CD8-positive, alpha-beta T cell (primary cell): ENCODE measurements at regions of chr4 and their contacts with region 1.

Region 1: DNA sequence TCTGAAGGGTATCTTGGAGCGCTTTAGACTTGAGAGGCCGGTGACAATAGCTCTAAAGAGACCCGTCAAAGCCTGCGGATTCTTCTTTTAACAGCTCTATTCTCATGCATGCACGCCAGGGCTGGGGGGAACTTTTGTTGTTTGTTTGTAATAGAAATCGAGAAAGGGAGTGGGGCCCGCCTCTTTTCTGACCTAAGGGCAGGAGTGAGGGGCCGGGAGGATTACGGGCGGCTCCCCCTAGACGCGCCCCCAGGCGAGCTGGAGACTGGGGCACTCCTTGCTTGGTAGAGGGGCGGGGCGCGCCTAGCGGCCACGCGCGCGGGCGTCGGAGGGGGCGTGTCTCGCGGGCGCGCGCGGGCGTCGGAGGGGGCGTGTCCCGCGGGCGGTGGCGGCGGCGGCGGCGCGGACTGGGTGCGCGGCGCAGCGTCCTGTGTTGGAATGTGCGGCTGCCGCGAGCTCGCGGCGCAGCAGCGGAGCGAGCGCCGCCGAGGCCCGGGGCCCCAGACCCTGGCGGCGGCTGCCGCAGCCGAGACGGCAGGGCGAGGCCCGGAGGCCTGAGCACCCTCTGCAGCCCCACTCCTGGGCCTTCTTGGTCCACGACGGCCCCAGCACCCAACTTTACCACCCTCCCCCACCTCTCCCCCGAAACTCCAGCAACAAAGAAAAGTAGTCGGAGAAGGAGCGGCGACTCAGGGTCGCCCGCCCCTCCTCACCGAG is at the start of gene REST:
- DNase-seq: peak; percentile 74 to 91 (median 84)
- ATAC-seq: peak; percentile 67
- H3K4me3 ChIP-seq: peak within 1 kb of the TSS; percentile 64 to 92
- H3K4me3 Mint-ChIP-seq: peak within 1 kb of the TSS; percentile 97
- H3K27ac ChIP-seq: peak within 1 kb of the TSS; percentile 57 to 86
- H3K27ac Mint-ChIP-seq: peak within 1 kb of the TSS; percentile 95
- H3K4me1 ChIP-seq: peaks cover 43% of the 10 kb centered on the region
- H3K4me1 Mint-ChIP-seq: peaks cover 42% of the 10 kb centered on the region
- H3K27me3 ChIP-seq: no peaks in the 10 kb centered on the region
- H3K27me3 Mint-ChIP-seq: no peaks in the 10 kb centered on the region
- CTCF ChIP-seq: no peak
- total RNA-seq, gene REST: 58.9 to 60.7 TPM

Region 2: GRCh38 chr4:55395529-55396307 is 1511.9 kb before region 1 on chr4 and contains the start of gene TMEM165:
- CTCF ChIA-PET with region 1: no interaction called
- POLR2A ChIA-PET with region 1: no interaction called
- intact Hi-C with region 1: loop called in 1 of 2 experiments (anchors 5 kb)
- DNase-seq: peak; percentile 72 to 93 (median 86)
- ATAC-seq: peak; percentile 94
- H3K4me3 ChIP-seq: peak within 1 kb of the TSS; percentile 68 to 74
- H3K4me3 Mint-ChIP-seq: peak within 1 kb of the TSS; percentile 97
- H3K27ac ChIP-seq: peak within 1 kb of the TSS; percentile 83 to 93
- H3K27ac Mint-ChIP-seq: peak within 1 kb of the TSS; percentile 98
- H3K4me1 ChIP-seq: peaks cover 36% of the 10 kb centered on the region
- H3K4me1 Mint-ChIP-seq: peaks cover 38% of the 10 kb centered on the region
- H3K27me3 ChIP-seq: no peaks in the 10 kb centered on the region
- H3K27me3 Mint-ChIP-seq: no peaks in the 10 kb centered on the region
- CTCF ChIP-seq: peak; percentile 0
- total RNA-seq, gene TMEM165: 31.0 to 31.5 TPM

Region 3: DNA sequence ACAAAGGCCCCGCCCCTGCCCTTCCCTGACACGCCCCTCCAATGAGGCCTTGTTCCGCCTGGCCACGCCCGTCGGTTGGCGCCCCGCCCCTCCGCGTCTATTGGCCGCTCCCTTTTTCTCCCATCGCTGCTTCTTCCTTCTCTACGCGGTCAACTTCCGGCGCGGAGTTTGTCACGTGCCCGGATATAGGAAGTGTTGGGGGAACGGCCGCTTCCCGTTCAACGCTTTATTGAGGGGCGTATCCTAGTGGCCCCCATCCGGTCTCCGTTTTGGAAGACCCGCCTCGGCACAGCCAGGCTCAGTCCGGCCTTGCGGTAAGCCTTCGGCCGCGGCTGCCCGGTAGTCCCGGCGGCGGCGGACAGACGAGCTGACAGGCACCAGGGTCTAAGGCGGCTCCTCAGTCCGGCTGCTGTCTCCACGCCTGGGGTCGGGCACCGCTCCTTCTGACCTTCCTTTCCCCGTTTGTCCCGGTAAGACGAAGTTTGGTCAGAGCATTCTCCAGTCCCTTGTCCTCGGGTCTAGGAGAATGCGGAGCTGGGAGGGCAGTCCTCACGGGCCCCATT is 1054.1 kb before region 1 on chr4 and contains the start of gene EXOC1:
- CTCF ChIA-PET with region 1: no interaction called
- POLR2A ChIA-PET with region 1: no interaction called
- intact Hi-C with region 1: loop called in 1 of 2 experiments (anchors 5 kb)
- DNase-seq: peak; percentile 90 to 98 (median 97)
- ATAC-seq: peak; percentile 96
- H3K4me3 ChIP-seq: peak within 1 kb of the TSS; percentile 96
- H3K4me3 Mint-ChIP-seq: peak within 1 kb of the TSS; percentile 36
- H3K27ac ChIP-seq: peak within 1 kb of the TSS; percentile 70 to 86
- H3K27ac Mint-ChIP-seq: peak within 1 kb of the TSS; percentile 64
- H3K4me1 ChIP-seq: peaks cover 40% of the 10 kb centered on the region
- H3K4me1 Mint-ChIP-seq: peaks cover 38% of the 10 kb centered on the region
- H3K27me3 ChIP-seq: no peaks in the 10 kb centered on the region
- H3K27me3 Mint-ChIP-seq: no peaks in the 10 kb centered on the region
- CTCF ChIP-seq: no peak
- total RNA-seq, gene EXOC1: 12.1 to 14.5 TPM

Region 4: GRCh38 chr4:56467284-56468096 is 440.2 kb before region 1 on chr4 and contains the start of gene SRP72:
- CTCF ChIA-PET with region 1: no interaction called
- POLR2A ChIA-PET with region 1: interaction called, 3 read pairs
- intact Hi-C with region 1: loop called in 1 of 2 experiments (anchors 10 kb)
- DNase-seq: peak; percentile 81 to 95 (median 90)
- ATAC-seq: peak; percentile 96
- H3K4me3 ChIP-seq: peak within 1 kb of the TSS; percentile 63 to 98
- H3K4me3 Mint-ChIP-seq: peak within 1 kb of the TSS; percentile 100
- H3K27ac ChIP-seq: peak within 1 kb of the TSS; percentile 69 to 92
- H3K27ac Mint-ChIP-seq: peak within 1 kb of the TSS; percentile 100
- H3K4me1 ChIP-seq: peaks cover 44% of the 10 kb centered on the region
- H3K4me1 Mint-ChIP-seq: peaks cover 60% of the 10 kb centered on the region
- H3K27me3 ChIP-seq: no peaks in the 10 kb centered on the region
- H3K27me3 Mint-ChIP-seq: no peaks in the 10 kb centered on the region
- CTCF ChIP-seq: no peak
- total RNA-seq, gene SRP72: 142 to 148 TPM

Region 5: DNA sequence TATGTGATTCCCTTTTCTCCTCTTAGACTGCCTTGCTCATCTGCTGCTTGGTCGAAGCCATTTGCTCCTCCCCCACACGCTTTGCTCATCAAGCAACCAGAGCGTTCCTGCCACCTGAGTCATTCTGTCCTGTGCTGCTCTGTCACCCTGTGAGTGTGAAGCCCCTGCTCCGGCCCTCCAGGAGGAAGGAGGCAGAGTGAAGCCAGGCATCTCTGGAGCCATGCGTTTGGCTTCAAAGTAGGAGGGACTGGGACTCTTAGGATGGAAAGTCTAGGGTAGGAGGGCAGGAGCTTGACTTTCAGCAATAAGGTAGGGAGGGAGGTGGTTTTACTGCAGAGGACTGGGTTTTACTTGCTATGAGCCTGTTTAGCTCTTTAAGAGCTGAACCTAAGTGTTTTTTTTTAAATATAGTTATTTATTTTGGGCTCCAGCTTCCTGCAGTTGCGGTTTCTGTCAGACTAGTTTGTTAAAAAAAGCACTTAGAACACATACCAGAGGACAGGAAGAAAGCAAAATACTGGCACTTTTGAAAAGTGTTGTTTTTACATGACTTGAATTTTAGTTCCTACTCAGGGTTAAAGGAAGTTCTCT is 149.7 kb before region 1 on chr4:
- CTCF ChIA-PET with region 1: no interaction called
- POLR2A ChIA-PET with region 1: no interaction called
- intact Hi-C with region 1: loop called in 1 of 2 experiments (anchors 5 kb)
- DNase-seq: peak; percentile 26 to 85 (median 65)
- ATAC-seq: peak; percentile 82
- H3K4me3 ChIP-seq: peak overlapping the region; percentile 33 to 44
- H3K4me3 Mint-ChIP-seq: peak overlapping the region; percentile 82
- H3K27ac ChIP-seq: peak overlapping the region; percentile 29 to 81
- H3K27ac Mint-ChIP-seq: peak overlapping the region; percentile 98
- H3K4me1 ChIP-seq: peaks cover 41% of the 10 kb centered on the region
- H3K4me1 Mint-ChIP-seq: peaks cover 60% of the 10 kb centered on the region
- H3K27me3 ChIP-seq: no peaks in the 10 kb centered on the region
- H3K27me3 Mint-ChIP-seq: no peaks in the 10 kb centered on the region
- CTCF ChIP-seq: no peak

Region 6: DNA sequence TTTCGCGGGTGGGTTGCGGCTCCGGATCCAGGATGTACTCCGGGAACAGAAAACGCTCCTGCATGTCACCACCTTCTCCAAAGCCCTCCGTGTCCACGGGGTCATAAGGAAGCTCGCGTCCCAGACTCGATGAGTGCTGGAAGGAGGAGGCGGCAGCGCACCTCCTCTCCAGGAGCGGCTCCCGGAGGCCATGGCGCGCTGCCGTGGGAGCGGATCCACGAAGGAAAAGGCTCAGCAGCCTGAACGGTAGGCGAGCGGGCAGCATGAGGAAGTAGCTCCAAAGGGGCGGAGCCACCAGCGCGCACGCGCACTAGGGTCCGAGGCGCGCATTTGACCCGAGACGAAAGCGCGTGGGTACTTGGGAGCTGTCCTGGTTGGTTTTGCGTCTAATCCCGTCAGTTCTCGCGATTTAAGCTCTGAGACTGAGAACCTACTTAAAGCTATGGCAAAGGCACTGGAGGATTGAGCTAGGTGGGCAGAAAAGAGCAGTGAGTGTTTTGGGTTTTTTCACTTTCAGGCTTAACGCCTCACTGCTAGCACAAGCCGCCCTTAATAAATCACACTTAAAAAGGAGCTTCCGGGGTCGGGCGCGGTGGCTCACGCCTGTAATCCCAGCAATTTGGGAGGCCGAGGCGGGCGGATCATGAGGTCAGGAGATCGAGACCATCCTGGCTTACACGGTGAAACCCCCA is 69.8 kb after region 1 on chr4 and contains the start of gene NOA1:
- CTCF ChIA-PET with region 1: interaction called, 15 read pairs
- POLR2A ChIA-PET with region 1: interaction called, 114 read pairs
- intact Hi-C with region 1: loop called (anchors 1 kb)
- DNase-seq: peak; percentile 95 to 99 (median 97)
- ATAC-seq: peak; percentile 79
- H3K4me3 ChIP-seq: peak within 1 kb of the TSS; percentile 94 to 100
- H3K4me3 Mint-ChIP-seq: peak within 1 kb of the TSS; percentile 93
- H3K27ac ChIP-seq: peak within 1 kb of the TSS; percentile 78 to 84
- H3K27ac Mint-ChIP-seq: peak within 1 kb of the TSS; percentile 94
- H3K4me1 ChIP-seq: peaks cover 45% of the 10 kb centered on the region
- H3K4me1 Mint-ChIP-seq: peaks cover 56% of the 10 kb centered on the region
- H3K27me3 ChIP-seq: no peaks in the 10 kb centered on the region
- H3K27me3 Mint-ChIP-seq: no peaks in the 10 kb centered on the region
- CTCF ChIP-seq: no peak
- total RNA-seq, gene NOA1: 16.5 to 17.2 TPM

Region 7: DNA sequence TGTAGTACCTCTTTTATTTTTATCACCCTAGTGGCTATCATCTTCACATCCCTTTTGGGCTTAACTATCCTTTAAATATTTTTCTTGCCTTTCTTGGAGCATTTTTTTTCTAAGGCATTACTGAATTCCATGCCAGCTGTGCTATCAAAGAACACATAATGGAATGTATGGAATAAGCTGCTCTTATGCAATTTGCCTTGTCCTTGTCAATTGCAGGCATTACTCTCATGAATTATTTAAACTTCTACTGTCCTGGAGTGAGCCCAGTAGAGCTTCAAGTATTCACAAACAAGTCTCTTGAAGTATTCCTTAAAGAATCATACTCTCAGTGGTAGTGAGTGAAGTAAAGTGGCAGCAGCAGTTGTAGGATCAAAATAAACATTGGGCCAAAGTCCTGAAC is 347.1 kb after region 1 on chr4:
- CTCF ChIA-PET with region 1: no interaction called
- POLR2A ChIA-PET with region 1: no interaction called
- intact Hi-C with region 1: no loop called
- DNase-seq: no peak
- ATAC-seq: no peak
- H3K4me3 ChIP-seq: no peak overlapping the region
- H3K4me3 Mint-ChIP-seq: no peak overlapping the region
- H3K27ac ChIP-seq: no peak overlapping the region
- H3K27ac Mint-ChIP-seq: no peak overlapping the region
- H3K4me1 ChIP-seq: no peaks in the 10 kb centered on the region
- H3K4me1 Mint-ChIP-seq: no peaks in the 10 kb centered on the region
- H3K27me3 ChIP-seq: no peaks in the 10 kb centered on the region
- H3K27me3 Mint-ChIP-seq: no peaks in the 10 kb centered on the region
- CTCF ChIP-seq: no peak